Breast epithelium (tissue), 4 donors: ENCODE measurements at regions of chr20 and their contacts with region 1.

Region 1: DNA sequence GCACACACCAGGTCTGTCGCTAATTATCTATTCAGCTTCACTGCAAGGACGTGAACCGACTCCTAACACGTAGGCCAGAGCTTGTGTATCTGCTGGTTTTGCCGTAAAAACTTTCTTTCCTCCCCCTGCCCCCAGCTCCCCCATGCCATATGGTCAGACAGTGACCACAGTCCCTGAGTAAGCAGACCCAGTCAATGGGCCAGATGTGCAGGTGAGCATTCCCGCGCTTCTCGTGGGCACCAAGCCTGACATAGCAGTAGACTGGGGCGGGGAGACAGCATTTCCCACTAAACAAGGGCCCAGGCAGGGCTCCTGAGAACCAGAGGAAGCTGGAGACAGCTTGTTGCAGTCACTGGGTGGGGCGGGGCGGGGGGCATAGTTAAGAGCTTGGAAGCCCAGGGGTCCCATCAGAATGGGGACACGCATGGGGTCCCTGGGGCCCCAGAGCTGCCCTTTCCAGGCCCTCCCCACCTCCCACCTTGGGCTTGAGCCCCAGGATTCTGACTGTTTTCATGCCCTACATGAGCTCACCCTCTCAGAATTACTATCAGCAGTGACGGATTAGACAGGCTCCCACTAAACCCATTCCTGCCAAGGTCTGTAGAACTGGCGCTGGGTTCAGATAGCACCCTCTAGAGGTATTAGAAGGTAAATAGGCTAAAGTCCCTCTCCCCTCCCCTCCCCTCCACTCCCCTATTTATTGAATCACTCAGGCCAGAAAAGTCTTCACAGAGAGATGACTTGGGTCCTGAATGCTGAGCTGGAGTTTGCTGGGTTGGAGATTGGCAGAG is 51.8 kb downstream of the CDH26 start:
- DNase-seq: no peak
- H3K4me3 ChIP-seq: no peak overlapping the region
- H3K27ac ChIP-seq: no peak overlapping the region
- H3K4me1 ChIP-seq: no peaks in the 10 kb centered on the region
- H3K27me3 ChIP-seq: no peaks in the 10 kb centered on the region
- CTCF ChIP-seq: no peak
- POLR2A ChIP-seq: no peak

Region 2: GRCh38 chr20:59810449-59811187 is 199.4 kb before region 1 on chr20:
- intact Hi-C with region 1: loop called (anchors 10 kb)
- DNase-seq: no peak
- H3K4me3 ChIP-seq: no peak overlapping the region
- H3K27ac ChIP-seq: no peak overlapping the region
- H3K4me1 ChIP-seq: no peaks in the 10 kb centered on the region
- H3K27me3 ChIP-seq: peaks cover 0 to 13% of the 10 kb centered on the region in 2 donors
- CTCF ChIP-seq: no peak
- POLR2A ChIP-seq: no peak

Region 3: GRCh38 chr20:60037120-60037499 is 27.1 kb after region 1 on chr20:
- intact Hi-C with region 1: no loop called
- DNase-seq: no peak
- H3K4me3 ChIP-seq: no peak overlapping the region
- H3K27ac ChIP-seq: no peak overlapping the region
- H3K4me1 ChIP-seq: no peaks in the 10 kb centered on the region
- H3K27me3 ChIP-seq: no peaks in the 10 kb centered on the region
- CTCF ChIP-seq: no peak
- POLR2A ChIP-seq: no peak